Activated T-helper 1 cell treated with anti-CD3 and anti-CD28 coated beads, Interleukin-12 subunit alpha, Interleukin-12 subunit beta, Interleukin-2, Interleukin-4 antibody, amounts not matched to agents 30 ng/mL and 10 ng/mL and 1 ng/mL, durations not matched to agents 14 hours and 24 hours and 36 hours (primary cell): ENCODE measurements at regions of chr16 and their contacts with region 1.

Region 1: GRCh38 chr16:56625140-56625942 is at the start of gene MT1E:
- DNase-seq: peak; percentile 71
- H3K4me3 Mint-ChIP-seq: peak within 1 kb of the TSS; percentile 92
- H3K27ac Mint-ChIP-seq: peak within 1 kb of the TSS; percentile 93
- H3K4me1 Mint-ChIP-seq: peaks cover 23% of the 10 kb centered on the region
- H3K27me3 Mint-ChIP-seq: peaks cover 6% of the 10 kb centered on the region
- total RNA-seq, gene MT1E: 135 TPM in 2 replicates

Region 2: GRCh38 chr16:56643080-56643778 is 17.9 kb after region 1 on chr16:
- intact Hi-C with region 1: loop called (anchors 1 kb)
- DNase-seq: peak; percentile 75
- H3K4me3 Mint-ChIP-seq: peak overlapping the region; percentile 70
- H3K27ac Mint-ChIP-seq: no peak overlapping the region
- H3K4me1 Mint-ChIP-seq: peaks cover 25% of the 10 kb centered on the region
- H3K27me3 Mint-ChIP-seq: peaks cover 52% of the 10 kb centered on the region

Region 3: GRCh38 chr16:56657555-56658326 is 32.4 kb after region 1 on chr16 and contains the start of gene MT1F:
- intact Hi-C with region 1: loop called (anchors 1 kb)
- DNase-seq: peak; percentile 38
- H3K4me3 Mint-ChIP-seq: peak within 1 kb of the TSS; percentile 98
- H3K27ac Mint-ChIP-seq: peak within 1 kb of the TSS; percentile 82
- H3K4me1 Mint-ChIP-seq: peaks cover 26% of the 10 kb centered on the region
- H3K27me3 Mint-ChIP-seq: peaks cover 21% of the 10 kb centered on the region
- total RNA-seq, gene MT1F: 4.3 and 5.2 TPM in 2 replicates